Adrenal gland (tissue), 19 donors: ENCODE measurements at regions of chr20 and their contacts with region 1.

Region 1: DNA sequence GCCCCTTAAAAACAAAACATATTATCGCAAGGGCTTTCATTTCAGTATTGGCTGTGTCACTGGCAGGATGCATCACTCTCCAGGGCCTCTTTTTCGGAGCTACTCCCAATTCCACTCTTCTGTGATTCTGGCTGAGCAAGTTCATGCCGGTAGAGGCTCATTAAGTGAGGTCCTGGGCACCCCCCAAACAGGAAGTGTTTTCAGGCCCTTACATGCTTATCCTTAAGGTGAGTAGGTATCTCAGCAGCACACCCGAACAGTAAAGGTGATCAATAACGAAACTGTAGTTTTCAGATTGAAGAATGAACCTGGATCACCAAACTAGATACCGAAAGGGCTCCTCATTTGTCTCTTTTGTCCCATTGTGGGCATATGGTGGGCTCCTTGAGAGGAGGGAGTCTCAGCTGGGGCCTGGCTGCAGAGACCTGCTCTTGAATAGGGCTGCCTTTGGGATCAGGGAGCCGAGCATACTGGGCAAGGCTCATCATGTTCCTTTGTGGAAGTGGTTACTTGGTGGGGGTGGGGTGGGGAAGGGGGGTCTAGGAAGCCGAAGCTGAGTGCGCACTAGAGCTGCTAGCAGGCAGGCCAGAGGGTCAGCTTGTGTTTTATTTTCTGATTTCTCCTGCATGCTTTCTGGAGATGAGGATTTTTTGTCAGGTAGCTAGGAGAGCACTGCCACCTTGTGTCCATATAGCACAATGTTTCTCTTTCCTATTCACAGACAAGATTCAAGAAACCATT is 65.2 kb downstream of the CDS2 start:
- DNase-seq: peak in 6 of 7 donors; percentile 42 to 74 (median 58)
- H3K4me3 ChIP-seq: no peak overlapping the region
- H3K27ac ChIP-seq: peak overlapping the region in 3 of 5 donors; percentile 11 to 59 (median 48)
- H3K4me1 ChIP-seq: peaks cover 0 to 8% of the 10 kb centered on the region in 2 donors
- H3K27me3 ChIP-seq: no peaks in the 10 kb centered on the region
- CTCF ChIP-seq: peak; percentile 67 to 93 (median 88)
- POLR2A ChIP-seq: no peak

Region 2: GRCh38 chr20:4406627-4407026 is 785.4 kb before region 1 on chr20:
- intact Hi-C with region 1: no loop called
- DNase-seq: peak in 2 of 7 donors; percentile 4 to 65
- H3K4me3 ChIP-seq: no peak overlapping the region
- H3K27ac ChIP-seq: no peak overlapping the region
- H3K4me1 ChIP-seq: no peaks in the 10 kb centered on the region
- H3K27me3 ChIP-seq: no peaks in the 10 kb centered on the region
- CTCF ChIP-seq: no peak
- POLR2A ChIP-seq: no peak

Region 3: DNA sequence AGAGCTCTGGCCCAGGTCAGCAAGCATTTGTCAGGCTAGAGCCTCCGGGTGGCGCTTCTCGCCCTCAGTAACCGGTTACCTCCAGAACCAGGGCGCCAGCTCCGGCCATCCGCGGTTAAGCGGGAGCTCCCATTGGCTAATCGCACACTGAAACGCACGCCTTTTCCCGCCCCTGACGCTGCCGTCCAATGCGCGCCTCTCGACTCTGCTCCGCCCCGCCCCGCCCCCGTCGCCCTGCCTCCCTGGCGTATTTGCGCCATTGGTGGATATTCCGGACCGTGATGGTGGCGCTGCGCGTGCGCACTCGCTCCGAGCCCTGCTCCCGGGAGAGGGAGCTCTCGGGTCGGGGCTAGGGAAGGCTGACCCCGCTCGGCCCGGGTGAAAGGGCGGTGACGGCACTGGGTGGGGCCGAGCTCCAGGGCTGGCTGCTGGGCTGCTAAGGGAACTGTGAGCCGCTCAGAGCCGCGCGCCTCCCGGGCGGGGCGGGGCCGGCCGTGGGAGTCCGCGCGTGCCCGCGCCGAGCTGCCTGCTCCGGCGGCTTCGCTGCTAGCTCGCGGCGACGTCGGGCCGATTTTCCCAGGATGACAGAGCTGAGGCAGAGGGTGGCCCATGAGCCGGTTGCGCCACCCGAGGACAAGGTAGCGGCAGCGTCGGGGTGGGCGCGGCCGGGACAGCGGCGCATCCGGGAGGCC is 65.3 kb before region 1 on chr20 and contains the start of gene CDS2:
- intact Hi-C with region 1: loop called (anchors 5 kb)
- DNase-seq: peak; percentile 100
- H3K4me3 ChIP-seq: peak within 1 kb of the TSS; percentile 44 to 91 (median 79)
- H3K27ac ChIP-seq: peak within 1 kb of the TSS in 4 of 5 donors; percentile 91 to 97 (median 94)
- H3K4me1 ChIP-seq: peaks cover 12 to 27% of the 10 kb centered on the region in 2 donors
- H3K27me3 ChIP-seq: no peaks in the 10 kb centered on the region
- CTCF ChIP-seq: peak; percentile 35 to 77 (median 54)
- POLR2A ChIP-seq: peak; percentile 82 to 88
- total RNA-seq, gene CDS2: 19.5 to 71.0 (median 42.0) TPM